ENCODE measurements at regions of chr1 and their contacts with region 1.

Region 1: GRCh38 chr1:209860293-209860881 is 32.6 kb downstream of the UTP25 start:
- DNase-seq: peak; percentile 26
- ATAC-seq: peak; percentile 86
- H3K4me3 Mint-ChIP-seq: no peak overlapping the region
- H3K27ac Mint-ChIP-seq: no peak overlapping the region
- H3K4me1 Mint-ChIP-seq: no peaks in the 10 kb centered on the region
- H3K27me3 Mint-ChIP-seq: peaks cover 5% of the 10 kb centered on the region
- CTCF ChIP-seq: peak; percentile 93

Region 2: DNA sequence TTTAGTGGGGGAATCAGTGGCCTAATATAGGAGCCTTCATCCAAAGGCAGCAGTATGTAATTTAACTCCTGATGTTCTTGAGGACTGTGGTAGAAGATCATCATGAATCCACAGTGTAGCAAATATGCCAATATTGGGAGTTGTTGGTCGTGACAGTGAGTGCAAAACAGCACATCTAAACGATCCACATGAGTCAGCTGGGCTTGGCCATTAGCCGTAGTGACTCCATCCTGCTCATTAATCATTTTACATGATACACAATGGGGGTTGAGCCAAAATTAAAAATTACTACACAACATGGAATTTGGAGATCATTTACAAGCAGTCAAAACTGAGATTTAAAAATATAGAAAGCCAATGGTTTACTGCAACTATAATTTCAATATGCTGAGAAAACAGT is 930.8 kb before region 1 on chr1:
- CTCF ChIA-PET with region 1: no interaction called
- POLR2A ChIA-PET with region 1: no interaction called
- intact Hi-C with region 1: no loop called
- DNase-seq: no peak
- ATAC-seq: no peak
- H3K4me3 Mint-ChIP-seq: no peak overlapping the region
- H3K27ac Mint-ChIP-seq: no peak overlapping the region
- H3K4me1 Mint-ChIP-seq: no peaks in the 10 kb centered on the region
- H3K27me3 Mint-ChIP-seq: peaks cover 3% of the 10 kb centered on the region
- CTCF ChIP-seq: no peak

Region 3: GRCh38 chr1:209844695-209845407 is 15.5 kb before region 1 on chr1:
- CTCF ChIA-PET with region 1: interaction called, 16 read pairs
- POLR2A ChIA-PET with region 1: no interaction called
- intact Hi-C with region 1: no loop called
- DNase-seq: no peak
- ATAC-seq: no peak
- H3K4me3 Mint-ChIP-seq: no peak overlapping the region
- H3K27ac Mint-ChIP-seq: no peak overlapping the region
- H3K4me1 Mint-ChIP-seq: peaks cover 2% of the 10 kb centered on the region
- H3K27me3 Mint-ChIP-seq: no peaks in the 10 kb centered on the region
- CTCF ChIP-seq: no peak

Region 4: DNA sequence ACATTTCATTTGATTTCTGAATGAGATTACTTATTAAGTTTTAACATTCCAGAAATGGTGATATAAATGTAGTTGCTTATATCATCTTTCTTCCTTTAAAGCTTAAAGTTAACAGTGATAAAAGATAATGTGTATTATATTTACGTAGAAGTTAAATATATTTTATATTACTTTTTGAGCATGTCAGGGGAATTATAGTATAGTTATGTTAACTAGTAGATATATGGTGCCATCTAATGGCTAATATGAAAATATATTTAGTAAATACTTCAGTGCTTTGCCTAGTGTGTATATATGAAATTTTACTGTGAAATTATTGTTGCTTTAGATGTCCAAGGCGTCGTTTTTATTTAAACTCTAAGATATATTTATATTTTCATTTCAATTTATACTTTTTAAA is 129.1 kb after region 1 on chr1:
- CTCF ChIA-PET with region 1: interaction called, 9 read pairs
- POLR2A ChIA-PET with region 1: no interaction called
- intact Hi-C with region 1: loop called (anchors 1 kb)
- DNase-seq: no peak
- ATAC-seq: no peak
- H3K4me3 Mint-ChIP-seq: no peak overlapping the region
- H3K27ac Mint-ChIP-seq: no peak overlapping the region
- H3K4me1 Mint-ChIP-seq: no peaks in the 10 kb centered on the region
- H3K27me3 Mint-ChIP-seq: peaks cover 15% of the 10 kb centered on the region
- CTCF ChIP-seq: no peak